ENCODE measurements at regions of chr6 and their contacts with region 1.

Region 1: DNA sequence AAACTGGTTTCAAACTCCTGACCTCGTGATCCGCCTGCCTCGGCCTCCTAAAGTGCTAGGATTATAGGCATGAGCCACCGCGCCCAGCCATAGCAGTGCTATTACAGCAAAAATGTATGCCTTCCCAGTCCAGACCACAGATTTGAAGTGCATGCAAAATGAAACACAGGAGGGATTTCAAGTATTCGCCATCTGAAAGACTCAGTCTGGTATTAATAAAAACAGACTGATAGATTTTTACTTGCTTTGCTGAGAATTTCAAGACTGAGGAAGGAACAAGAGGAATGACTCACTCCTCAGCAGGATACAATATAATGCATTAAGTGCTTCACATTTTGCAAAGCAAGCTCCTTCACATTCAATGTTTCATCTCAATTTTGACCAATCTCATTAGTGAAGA is 134.9 kb downstream of the TMEM200A start:
- DNase-seq: no peak

Region 2: GRCh38 chr6:130466052-130467048 is 34.3 kb before region 1 on chr6:
- intact Hi-C with region 1: no loop called
- DNase-seq: no peak

Region 3: GRCh38 chr6:130537447-130537846 is 36.8 kb after region 1 on chr6:
- intact Hi-C with region 1: no loop called
- DNase-seq: no peak

Region 4: DNA sequence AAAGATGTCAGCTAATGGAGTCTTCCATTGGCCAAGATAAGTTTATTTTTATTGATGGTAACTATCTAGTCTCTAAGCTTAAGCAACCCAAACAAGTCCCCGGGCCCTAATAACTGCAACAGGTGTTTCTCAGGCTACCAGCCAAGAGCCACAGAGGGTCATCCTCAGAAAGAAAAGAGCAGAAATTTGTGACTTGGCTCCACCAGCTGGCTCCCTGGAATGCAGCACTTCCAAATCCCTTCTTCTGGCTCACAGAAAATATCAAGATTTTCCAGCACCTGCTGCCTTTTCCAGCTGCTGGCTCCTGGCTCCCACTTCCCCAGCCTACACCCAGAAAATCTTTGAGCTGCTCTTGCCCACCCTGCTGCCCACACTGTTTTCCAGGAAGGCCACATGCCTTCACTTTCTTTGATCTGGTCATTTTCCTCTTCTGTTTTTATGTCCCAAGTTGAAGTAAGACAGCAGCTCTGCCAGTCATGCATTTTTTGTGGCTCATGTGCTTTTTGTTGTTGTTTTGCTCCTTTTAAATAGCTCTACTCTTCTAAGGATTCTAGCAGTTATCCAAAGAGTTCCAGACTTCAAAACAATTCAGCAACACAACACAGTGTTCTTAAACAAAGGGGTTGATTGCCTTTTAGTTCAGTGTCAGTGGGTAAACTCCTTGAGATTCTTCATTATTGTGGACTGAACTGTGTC is 175.5 kb after region 1 on chr6:
- intact Hi-C with region 1: loop called (anchors 10 kb)
- DNase-seq: no peak